Endothelial cell of umbilical vein (primary cell): ENCODE measurements at regions of chr2 and their contacts with region 1.

Region 1: DNA sequence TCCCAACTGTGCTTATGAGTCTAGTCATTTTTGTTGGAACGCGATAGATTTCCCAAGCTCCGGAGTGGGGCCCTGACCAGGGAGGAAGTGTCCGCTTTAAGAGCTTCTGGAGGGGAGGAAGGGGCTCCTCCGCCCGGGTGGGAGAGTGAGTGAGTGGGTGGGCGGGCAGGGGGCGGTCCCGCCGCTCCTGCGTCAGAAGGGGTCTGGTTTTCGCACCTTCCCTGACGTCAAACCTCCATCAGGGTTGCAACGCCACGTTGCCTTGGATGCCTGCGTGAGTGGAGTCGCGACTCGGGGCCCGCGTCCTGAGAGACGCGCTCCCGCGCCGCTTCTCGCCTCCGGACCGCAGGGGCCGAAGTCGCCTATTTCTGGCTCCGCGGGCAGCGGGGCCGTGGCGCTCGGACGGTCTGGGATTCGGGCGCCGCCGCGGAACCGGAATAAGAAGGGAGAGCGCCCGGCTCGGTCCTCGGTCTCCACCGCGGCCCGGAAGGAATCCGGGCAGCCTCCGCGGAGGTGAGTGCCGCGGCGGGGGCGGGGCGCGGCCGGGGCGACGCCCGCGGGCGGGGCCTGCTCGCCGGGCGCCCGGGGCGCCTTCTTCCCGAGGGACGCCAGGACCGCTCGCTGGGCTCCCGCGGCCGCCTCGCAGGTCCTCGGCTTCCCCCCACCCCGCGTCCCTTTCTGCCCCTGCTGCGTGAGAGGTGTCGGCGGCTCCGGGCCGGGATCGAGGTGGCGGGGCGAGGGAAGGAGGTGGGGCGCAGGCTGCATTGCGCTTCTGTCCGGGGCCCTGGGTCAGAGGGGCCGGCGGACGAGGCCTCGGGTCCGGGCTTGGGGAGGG is at the start of gene ZDBF2:
- DNase-seq: peak; percentile 73
- H3K4me3 ChIP-seq: peak within 1 kb of the TSS; percentile 69 to 93 (median 90)
- H3K27ac ChIP-seq: peak within 1 kb of the TSS; percentile 50
- H3K4me1 ChIP-seq: peaks cover 19% of the 10 kb centered on the region
- H3K27me3 ChIP-seq: peaks cover 31 to 77% of the 10 kb centered on the region in 2 experiments
- CTCF ChIP-seq: no peak
- POLR2A ChIP-seq: peak; percentile 62
- total RNA-seq, gene ZDBF2: 9.6 and 9.9 TPM in 2 replicates

Region 2: GRCh38 chr2:206296128-206296527 is 21.5 kb after region 1 on chr2:
- CTCF ChIA-PET with region 1: interaction called, 4 read pairs
- POLR2A ChIA-PET with region 1: no interaction called
- dilution Hi-C with region 1: no loop called
- intact Hi-C with region 1: loop called (anchors 2 kb)
- DNase-seq: peak; percentile 91
- H3K4me3 ChIP-seq: no peak overlapping the region
- H3K27ac ChIP-seq: peak overlapping the region; percentile 62
- H3K4me1 ChIP-seq: peaks cover 31% of the 10 kb centered on the region
- H3K27me3 ChIP-seq: no peaks in the 10 kb centered on the region
- CTCF ChIP-seq: no peak
- POLR2A ChIP-seq: no peak

Region 3: GRCh38 chr2:207091176-207091575 is 816.5 kb after region 1 on chr2:
- CTCF ChIA-PET with region 1: no interaction called
- POLR2A ChIA-PET with region 1: no interaction called
- dilution Hi-C with region 1: no loop called
- intact Hi-C with region 1: no loop called
- DNase-seq: peak; percentile 33
- H3K4me3 ChIP-seq: no peak overlapping the region
- H3K27ac ChIP-seq: no peak overlapping the region
- H3K4me1 ChIP-seq: peaks cover 17% of the 10 kb centered on the region
- H3K27me3 ChIP-seq: no peaks in the 10 kb centered on the region
- CTCF ChIP-seq: no peak
- POLR2A ChIP-seq: no peak